Mammary epithelial cell (primary cell): ENCODE measurements at regions of chr9 and their contacts with region 1.

Region 1: DNA sequence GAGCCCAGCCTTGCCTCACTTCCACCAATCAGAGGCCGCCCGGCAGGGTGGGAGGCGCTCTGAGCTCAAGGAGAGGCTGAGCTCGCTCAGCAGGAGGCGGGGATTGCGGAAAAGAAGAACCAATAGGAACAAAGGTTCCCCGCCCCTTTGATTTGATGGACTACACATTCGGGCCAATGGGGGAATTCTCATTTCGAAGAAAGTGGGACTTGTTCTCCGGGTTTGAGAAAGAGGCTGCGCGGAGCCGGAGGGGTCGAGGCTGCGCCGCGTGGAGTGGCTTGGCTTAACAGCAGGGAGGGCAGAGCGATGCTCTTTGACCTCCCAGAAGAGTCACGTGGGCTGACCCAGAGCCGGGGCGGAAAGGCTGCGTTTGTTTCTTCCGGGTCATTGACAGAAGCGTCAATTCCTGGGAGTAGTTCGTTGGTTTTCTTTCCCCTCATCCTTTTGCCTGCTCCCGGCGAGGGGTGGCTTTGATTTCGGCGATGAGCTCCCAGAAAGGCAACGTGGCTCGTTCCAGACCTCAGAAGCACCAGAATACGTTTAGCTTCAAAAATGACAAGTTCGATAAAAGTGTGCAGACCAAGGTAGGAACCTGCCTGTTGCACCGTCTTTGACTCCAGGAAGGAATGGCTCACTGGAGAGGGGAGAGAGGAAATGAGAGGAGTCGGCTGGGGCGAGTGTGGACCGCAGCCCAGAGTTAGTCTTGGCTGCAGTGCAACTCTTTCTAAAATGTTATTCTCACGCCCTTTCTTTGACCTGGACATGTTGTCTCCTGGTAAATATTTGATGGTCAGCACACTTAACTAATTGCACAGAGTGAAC is at the start of gene C9orf85:
- DNase-seq: peak; percentile 100
- H3K4me3 ChIP-seq: peak within 1 kb of the TSS; percentile 79 to 84 (median 80)
- H3K27ac ChIP-seq: peak within 1 kb of the TSS; percentile 63
- H3K4me1 ChIP-seq: peaks cover 13% of the 10 kb centered on the region
- H3K27me3 ChIP-seq: no peaks in the 10 kb centered on the region
- CTCF ChIP-seq: no peak
- total RNA-seq, gene C9orf85: 13.7 to 20.4 TPM

Region 2: DNA sequence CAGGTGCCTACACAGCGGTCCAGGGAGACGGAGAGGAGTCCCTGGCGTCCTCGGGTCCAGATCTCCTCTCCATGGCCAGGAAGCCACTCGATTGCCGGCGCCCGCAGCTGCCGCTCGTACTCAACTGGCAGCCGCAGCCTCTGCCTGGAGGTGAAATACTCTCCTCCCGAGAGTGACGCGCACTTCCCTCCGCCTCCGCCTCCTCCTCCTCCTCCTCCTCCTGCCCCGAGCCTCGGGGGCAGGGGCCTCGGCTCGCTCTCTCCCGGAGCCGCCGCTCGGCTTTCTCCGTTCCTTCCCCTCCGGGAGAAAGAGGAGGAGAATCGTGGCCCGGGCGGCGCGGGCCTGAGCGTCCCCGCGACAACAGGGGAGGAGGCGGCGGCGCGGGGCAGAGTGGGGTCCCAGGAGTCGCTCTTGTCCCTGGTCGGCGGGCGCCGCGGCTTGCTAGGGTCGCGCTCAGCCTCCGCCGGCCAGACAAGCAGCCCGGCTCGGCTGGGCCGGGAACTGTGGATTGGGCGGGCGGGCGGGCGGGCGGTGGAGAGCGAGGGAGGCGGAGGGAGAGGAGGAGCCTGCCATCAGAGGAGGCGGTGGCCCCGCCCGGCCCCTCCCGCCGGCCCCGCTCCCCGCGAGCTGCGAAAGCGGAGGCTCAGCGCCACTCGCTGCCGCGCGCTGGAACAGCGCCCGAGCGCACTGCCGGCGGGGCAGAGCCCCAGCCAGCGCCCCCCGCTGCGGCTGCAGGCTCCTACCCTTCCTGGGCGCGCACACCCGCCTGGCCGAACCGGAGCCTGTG is 142.9 kb before region 1 on chr9 and contains the start of gene CEMIP2:
- CTCF ChIA-PET with region 1: no interaction called
- dilution Hi-C with region 1: no loop called
- in situ Hi-C with region 1: no loop called
- intact Hi-C with region 1: no loop called
- DNase-seq: peak; percentile 94
- H3K4me3 ChIP-seq: peak within 1 kb of the TSS; percentile 76 to 86 (median 84)
- H3K27ac ChIP-seq: peak within 1 kb of the TSS; percentile 69
- H3K4me1 ChIP-seq: peaks cover 37% of the 10 kb centered on the region
- H3K27me3 ChIP-seq: no peaks in the 10 kb centered on the region
- CTCF ChIP-seq: peak; percentile 18 to 54
- total RNA-seq, gene CEMIP2: 76.4 to 398 TPM

Region 3: GRCh38 chr9:71928832-71929604 is 17.6 kb after region 1 on chr9:
- CTCF ChIA-PET with region 1: no interaction called
- dilution Hi-C with region 1: no loop called
- in situ Hi-C with region 1: no loop called
- intact Hi-C with region 1: loop called (anchors 1 kb)
- DNase-seq: peak; percentile 92
- H3K4me3 ChIP-seq: no peak overlapping the region
- H3K27ac ChIP-seq: peak overlapping the region; percentile 66
- H3K4me1 ChIP-seq: peaks cover 17% of the 10 kb centered on the region
- H3K27me3 ChIP-seq: no peaks in the 10 kb centered on the region
- CTCF ChIP-seq: no peak

Region 4: DNA sequence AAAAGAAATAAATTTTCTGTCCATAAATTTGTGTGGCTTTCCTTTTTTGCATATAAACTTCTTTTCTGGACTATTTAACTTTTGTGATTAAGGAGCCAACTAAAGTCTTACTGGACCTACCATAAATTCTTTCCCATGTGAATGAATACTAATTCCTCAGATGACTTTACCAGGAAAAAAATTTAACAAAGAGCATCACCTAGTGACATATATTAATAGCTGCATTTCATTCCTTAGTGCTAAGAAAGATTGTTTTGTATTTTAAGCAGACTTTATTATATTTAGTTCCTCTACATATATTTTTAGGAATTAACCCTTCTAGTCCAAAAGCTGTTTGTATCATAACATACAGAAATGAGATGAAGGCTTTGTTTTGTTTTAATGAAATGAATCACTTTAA is 64.4 kb after region 1 on chr9:
- CTCF ChIA-PET with region 1: no interaction called
- dilution Hi-C with region 1: no loop called
- in situ Hi-C with region 1: no loop called
- intact Hi-C with region 1: loop called (anchors 5 kb)
- DNase-seq: no peak
- H3K4me3 ChIP-seq: no peak overlapping the region
- H3K27ac ChIP-seq: no peak overlapping the region
- H3K4me1 ChIP-seq: no peaks in the 10 kb centered on the region
- H3K27me3 ChIP-seq: no peaks in the 10 kb centered on the region
- CTCF ChIP-seq: peak; percentile 22 to 55

Region 5: DNA sequence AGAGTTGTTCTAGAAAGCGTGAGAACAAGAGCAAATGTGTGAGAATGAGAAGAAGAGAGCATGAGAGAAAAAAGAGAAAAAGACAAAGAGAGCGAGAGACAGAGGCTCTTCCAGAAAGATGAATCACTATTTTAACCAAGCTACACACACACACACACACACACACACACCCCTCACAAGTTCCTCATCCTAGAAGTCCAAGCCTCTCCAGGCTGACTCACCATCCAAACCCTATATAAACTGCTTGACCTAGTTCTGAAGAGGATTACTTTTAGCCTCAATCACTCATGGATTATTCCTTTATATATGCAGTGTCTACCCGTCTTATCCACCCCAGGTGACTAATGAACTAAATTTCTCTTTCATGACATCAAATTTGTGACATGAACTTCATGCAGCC is 111.4 kb after region 1 on chr9:
- CTCF ChIA-PET with region 1: interaction called, 5 read pairs
- dilution Hi-C with region 1: no loop called
- in situ Hi-C with region 1: no loop called
- intact Hi-C with region 1: loop called (anchors 2 kb)
- DNase-seq: peak; percentile 89
- H3K4me3 ChIP-seq: no peak overlapping the region
- H3K27ac ChIP-seq: no peak overlapping the region
- H3K4me1 ChIP-seq: peaks cover 20% of the 10 kb centered on the region
- H3K27me3 ChIP-seq: no peaks in the 10 kb centered on the region
- CTCF ChIP-seq: no peak